CD4-positive, alpha-beta memory T cell (primary cell): ENCODE measurements at regions of chr13 and their contacts with region 1.

Region 1: GRCh38 chr13:75326173-75327134 is 155.5 kb downstream of the TBC1D4 start:
- DNase-seq: peak; percentile 79 to 87 (median 82)
- H3K4me3 ChIP-seq: peak overlapping the region; percentile 81 to 82
- H3K4me3 Mint-ChIP-seq: peak overlapping the region; percentile 89 to 98 (median 94)
- H3K27ac ChIP-seq: peak overlapping the region; percentile 85
- H3K27ac Mint-ChIP-seq: peak overlapping the region; percentile 92 to 99 (median 98)
- H3K4me1 ChIP-seq: peaks cover 33% of the 10 kb centered on the region
- H3K4me1 Mint-ChIP-seq: peaks cover 21 to 57% (median 35%) of the 10 kb centered on the region in 4 donors
- H3K27me3 ChIP-seq: no peaks in the 10 kb centered on the region
- H3K27me3 Mint-ChIP-seq: no peaks in the 10 kb centered on the region

Region 2: DNA sequence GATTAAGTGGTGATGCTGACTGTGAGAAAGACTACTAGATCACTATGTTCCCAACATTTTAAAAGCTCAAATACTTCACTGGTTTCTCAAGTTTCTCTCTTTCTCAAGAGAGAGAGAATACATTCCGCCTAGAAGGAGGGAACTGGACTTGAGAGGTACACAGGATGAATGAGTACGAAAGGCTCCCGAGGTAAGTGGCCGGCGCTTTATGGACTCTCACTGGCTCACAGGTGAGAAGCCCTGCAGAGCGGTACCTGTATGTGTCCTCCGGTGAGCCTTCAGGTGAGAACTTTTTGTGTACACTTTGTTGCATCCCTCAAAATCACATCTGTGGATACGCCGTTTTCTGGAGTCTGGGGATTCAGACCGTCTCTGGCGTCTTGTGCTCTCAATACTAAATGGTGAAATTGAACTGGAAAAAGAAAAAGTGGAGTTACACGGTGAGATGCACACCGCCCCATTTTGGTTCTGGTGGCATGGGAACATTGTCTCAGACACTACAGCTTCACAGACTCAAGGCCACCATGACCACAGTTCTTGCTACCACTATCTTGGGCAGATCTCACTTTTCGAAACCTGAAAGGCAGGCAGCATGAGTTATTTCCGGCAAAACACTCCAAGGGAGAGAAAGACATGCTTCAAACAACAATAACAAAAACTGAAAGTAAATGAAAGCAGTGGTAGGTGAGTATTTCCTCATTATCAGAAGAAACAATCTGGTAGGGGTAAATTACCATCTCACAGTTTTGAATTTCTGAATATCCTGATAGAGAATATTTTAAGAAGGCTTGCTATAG is 1611.1 kb before region 1 on chr13:
- CTCF ChIA-PET with region 1: no interaction called
- POLR2A ChIA-PET with region 1: interaction called, 4 read pairs
- intact Hi-C with region 1: loop called (anchors 10 kb)
- DNase-seq: peak; percentile 71 to 91 (median 79)
- H3K4me3 ChIP-seq: peak overlapping the region in 1 of 2 donors; percentile 6
- H3K4me3 Mint-ChIP-seq: peak overlapping the region; percentile 58 to 88 (median 78)
- H3K27ac ChIP-seq: peak overlapping the region; percentile 41
- H3K27ac Mint-ChIP-seq: peak overlapping the region; percentile 84 to 98 (median 94)
- H3K4me1 ChIP-seq: peaks cover 52% of the 10 kb centered on the region
- H3K4me1 Mint-ChIP-seq: peaks cover 48 to 70% (median 64%) of the 10 kb centered on the region in 4 donors
- H3K27me3 ChIP-seq: no peaks in the 10 kb centered on the region
- H3K27me3 Mint-ChIP-seq: no peaks in the 10 kb centered on the region

Region 3: DNA sequence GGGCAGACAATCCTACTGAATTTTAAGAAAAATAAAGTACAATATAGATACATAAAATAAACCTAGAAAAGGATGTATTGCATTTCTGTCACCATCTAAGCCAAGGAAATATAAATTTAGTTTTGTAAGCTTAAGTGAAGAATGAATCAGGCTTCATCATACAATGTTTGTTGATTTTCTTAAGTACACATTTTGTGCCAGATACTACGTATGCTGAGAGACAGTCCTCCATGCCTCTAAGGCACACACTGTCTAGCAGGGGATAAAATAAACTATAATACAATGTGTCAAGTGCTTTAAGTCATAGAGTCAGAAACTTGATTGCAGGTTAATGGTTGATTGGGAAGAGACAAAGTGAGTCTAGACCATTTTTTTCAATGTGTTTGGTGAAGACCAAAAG is 310.2 kb before region 1 on chr13:
- CTCF ChIA-PET with region 1: no interaction called
- POLR2A ChIA-PET with region 1: no interaction called
- intact Hi-C with region 1: no loop called
- DNase-seq: no peak
- H3K4me3 ChIP-seq: no peak overlapping the region
- H3K4me3 Mint-ChIP-seq: no peak overlapping the region
- H3K27ac ChIP-seq: no peak overlapping the region
- H3K27ac Mint-ChIP-seq: no peak overlapping the region
- H3K4me1 ChIP-seq: no peaks in the 10 kb centered on the region
- H3K4me1 Mint-ChIP-seq: no peaks in the 10 kb centered on the region
- H3K27me3 ChIP-seq: no peaks in the 10 kb centered on the region
- H3K27me3 Mint-ChIP-seq: peaks cover 5 to 17% of the 10 kb centered on the region in 2 donors

Region 4: GRCh38 chr13:75305059-75305458 is 21.4 kb before region 1 on chr13:
- CTCF ChIA-PET with region 1: interaction called, 3 read pairs
- POLR2A ChIA-PET with region 1: interaction called, 129 read pairs
- intact Hi-C with region 1: no loop called
- DNase-seq: no peak
- H3K4me3 ChIP-seq: no peak overlapping the region
- H3K4me3 Mint-ChIP-seq: no peak overlapping the region
- H3K27ac ChIP-seq: no peak overlapping the region
- H3K27ac Mint-ChIP-seq: peak overlapping the region in 1 of 7 donors; percentile 5
- H3K4me1 ChIP-seq: peaks cover 13% of the 10 kb centered on the region
- H3K4me1 Mint-ChIP-seq: peaks cover 0 to 13% (median 9%) of the 10 kb centered on the region in 4 donors
- H3K27me3 ChIP-seq: no peaks in the 10 kb centered on the region
- H3K27me3 Mint-ChIP-seq: no peaks in the 10 kb centered on the region

Region 5: DNA sequence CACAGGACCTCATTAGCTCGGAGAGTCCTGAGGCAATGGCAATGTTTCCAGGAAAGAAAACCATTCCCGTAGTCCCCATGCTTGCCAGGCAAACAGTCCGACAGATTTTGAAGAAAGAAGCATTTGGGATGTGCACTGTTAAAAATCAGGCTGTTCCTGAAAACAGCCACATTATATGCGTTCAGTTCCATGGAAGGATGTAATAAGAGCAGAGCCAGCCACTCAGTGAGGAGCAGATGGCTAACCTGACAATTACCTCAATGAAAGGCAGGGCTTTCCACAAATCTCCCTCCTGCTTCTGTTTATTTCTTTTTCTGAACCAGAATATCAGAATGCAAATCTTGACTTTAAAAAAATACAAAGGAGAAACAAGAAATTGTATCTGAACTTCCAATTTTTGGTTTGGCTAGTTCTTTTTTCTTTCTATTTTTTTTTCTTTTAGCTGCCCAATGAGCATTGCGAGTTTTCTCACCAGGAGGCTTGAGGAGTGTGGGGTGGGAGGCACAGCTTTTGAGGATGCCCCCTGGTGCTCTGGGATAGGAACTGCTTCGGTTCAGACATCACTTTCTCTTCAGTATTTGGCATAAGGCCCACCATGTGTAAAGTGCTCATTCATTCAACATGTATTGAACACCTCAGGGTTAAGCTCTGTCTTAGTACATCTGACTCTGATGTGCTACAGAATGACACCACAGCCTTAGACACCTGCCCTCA is 31.3 kb after region 1 on chr13:
- CTCF ChIA-PET with region 1: interaction called, 26 read pairs
- POLR2A ChIA-PET with region 1: interaction called, 18 read pairs
- intact Hi-C with region 1: loop called (anchors 1 kb)
- DNase-seq: peak; percentile 50 to 62 (median 55)
- H3K4me3 ChIP-seq: no peak overlapping the region
- H3K4me3 Mint-ChIP-seq: no peak overlapping the region
- H3K27ac ChIP-seq: no peak overlapping the region
- H3K27ac Mint-ChIP-seq: no peak overlapping the region
- H3K4me1 ChIP-seq: no peaks in the 10 kb centered on the region
- H3K4me1 Mint-ChIP-seq: peaks cover 0 to 3% (median 1%) of the 10 kb centered on the region in 4 donors
- H3K27me3 ChIP-seq: no peaks in the 10 kb centered on the region
- H3K27me3 Mint-ChIP-seq: peaks cover 0 to 4% of the 10 kb centered on the region in 2 donors

Region 6: DNA sequence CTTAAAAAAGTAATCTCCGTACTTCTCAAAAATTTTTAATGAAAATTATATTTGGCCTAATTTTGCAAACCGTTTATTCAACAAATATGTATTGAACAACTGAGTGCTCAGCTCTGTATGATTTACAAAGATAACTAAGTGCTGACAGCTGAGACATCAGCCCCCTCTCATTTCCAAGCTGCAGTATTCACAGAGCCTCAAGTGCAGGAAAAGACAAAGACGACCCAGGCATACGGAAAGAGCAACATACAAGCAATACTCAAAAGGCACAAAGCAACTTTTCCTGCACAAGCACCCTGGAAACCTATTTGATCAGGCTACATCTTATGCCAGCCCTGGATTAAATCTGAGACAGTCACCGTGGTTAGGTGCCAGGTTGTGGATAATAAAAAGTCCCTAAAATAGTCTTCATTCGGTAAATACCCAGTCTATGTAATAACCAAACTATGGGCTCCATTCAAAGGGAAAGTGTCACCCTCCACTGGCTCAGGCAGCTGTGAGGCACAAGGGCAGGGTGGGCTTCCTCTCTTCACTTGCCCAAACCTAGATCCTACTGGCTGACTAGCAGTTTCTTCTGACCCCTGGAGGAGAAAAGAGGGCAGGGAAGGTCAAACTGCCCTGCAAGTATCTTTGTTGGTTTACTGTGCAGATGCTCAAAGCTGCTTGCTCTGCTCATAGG is 90.0 kb after region 1 on chr13:
- CTCF ChIA-PET with region 1: no interaction called
- POLR2A ChIA-PET with region 1: no interaction called
- intact Hi-C with region 1: no loop called
- DNase-seq: no peak
- H3K4me3 ChIP-seq: no peak overlapping the region
- H3K4me3 Mint-ChIP-seq: no peak overlapping the region
- H3K27ac ChIP-seq: no peak overlapping the region
- H3K27ac Mint-ChIP-seq: no peak overlapping the region
- H3K4me1 ChIP-seq: no peaks in the 10 kb centered on the region
- H3K4me1 Mint-ChIP-seq: peaks cover 0 to 1% (median 0%) of the 10 kb centered on the region in 4 donors
- H3K27me3 ChIP-seq: no peaks in the 10 kb centered on the region
- H3K27me3 Mint-ChIP-seq: peaks cover 6 to 10% of the 10 kb centered on the region in 2 donors

Region 7: GRCh38 chr13:75549262-75550158 is 223.1 kb after region 1 on chr13 and contains the start of gene UCHL3:
- CTCF ChIA-PET with region 1: interaction called, 3 read pairs
- POLR2A ChIA-PET with region 1: interaction called, 9 read pairs
- intact Hi-C with region 1: loop called (anchors 2 kb)
- DNase-seq: peak; percentile 95 to 97 (median 97)
- H3K4me3 ChIP-seq: peak within 1 kb of the TSS; percentile 73 to 78
- H3K4me3 Mint-ChIP-seq: peak within 1 kb of the TSS; percentile 93 to 98 (median 97)
- H3K27ac ChIP-seq: peak within 1 kb of the TSS; percentile 83
- H3K27ac Mint-ChIP-seq: peak within 1 kb of the TSS; percentile 94 to 99 (median 99)
- H3K4me1 ChIP-seq: peaks cover 30% of the 10 kb centered on the region
- H3K4me1 Mint-ChIP-seq: peaks cover 26 to 46% (median 36%) of the 10 kb centered on the region in 4 donors
- H3K27me3 ChIP-seq: no peaks in the 10 kb centered on the region
- H3K27me3 Mint-ChIP-seq: no peaks in the 10 kb centered on the region
- total RNA-seq, gene UCHL3: 17.5 to 20.2 TPM

Region 8: DNA sequence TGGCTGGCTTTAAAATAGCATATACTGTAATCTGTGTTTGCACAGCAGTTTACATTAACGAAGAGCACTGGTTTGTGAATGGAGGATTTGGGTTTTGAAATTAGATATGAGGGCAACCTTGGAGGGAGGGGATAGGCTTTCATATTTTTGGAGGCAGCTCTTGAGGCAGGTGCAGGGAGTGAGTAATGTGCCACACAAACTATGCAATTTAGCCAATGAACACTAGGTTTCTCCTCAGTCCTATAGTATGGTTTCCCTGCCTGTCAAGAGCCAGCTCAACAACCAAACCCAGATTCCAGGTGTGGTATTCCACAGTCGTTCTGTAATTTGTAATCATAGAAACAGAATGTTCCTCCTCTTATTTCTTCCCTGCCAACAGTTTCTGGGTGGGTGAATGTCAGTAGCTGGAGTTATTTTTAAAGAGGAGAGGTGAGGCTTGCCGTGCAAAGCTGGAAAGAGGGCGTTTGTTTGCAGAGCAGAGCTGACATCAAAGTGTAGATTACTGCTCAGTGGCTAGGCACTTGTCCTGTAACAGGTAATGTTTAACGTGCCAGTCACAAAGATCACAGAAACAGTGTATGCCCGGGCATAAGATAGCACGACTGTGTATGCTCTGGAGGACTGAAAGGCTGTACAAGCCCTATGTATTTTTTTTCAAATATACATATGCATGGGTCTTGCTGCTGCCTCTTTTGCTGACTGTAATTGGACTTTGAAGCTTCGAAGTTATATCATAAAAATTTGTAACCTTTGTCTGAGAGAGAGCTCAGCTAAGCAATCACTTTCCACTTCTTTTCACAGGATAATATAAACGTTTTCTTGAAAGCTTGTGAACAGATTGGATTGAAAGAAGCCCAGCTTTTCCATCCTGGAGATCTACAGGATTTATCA is 433.9 kb after region 1 on chr13:
- CTCF ChIA-PET with region 1: no interaction called
- POLR2A ChIA-PET with region 1: interaction called, 4 read pairs
- intact Hi-C with region 1: loop called (anchors 10 kb)
- DNase-seq: peak in 4 of 5 donors; percentile 24 to 29 (median 26)
- H3K4me3 ChIP-seq: peak overlapping the region in 1 of 2 donors; percentile 20
- H3K4me3 Mint-ChIP-seq: peak overlapping the region; percentile 77 to 91 (median 84)
- H3K27ac ChIP-seq: no peak overlapping the region
- H3K27ac Mint-ChIP-seq: peak overlapping the region; percentile 62 to 87 (median 77)
- H3K4me1 ChIP-seq: peaks cover 64% of the 10 kb centered on the region
- H3K4me1 Mint-ChIP-seq: peaks cover 54 to 80% (median 66%) of the 10 kb centered on the region in 4 donors
- H3K27me3 ChIP-seq: no peaks in the 10 kb centered on the region
- H3K27me3 Mint-ChIP-seq: no peaks in the 10 kb centered on the region

Region 9: DNA sequence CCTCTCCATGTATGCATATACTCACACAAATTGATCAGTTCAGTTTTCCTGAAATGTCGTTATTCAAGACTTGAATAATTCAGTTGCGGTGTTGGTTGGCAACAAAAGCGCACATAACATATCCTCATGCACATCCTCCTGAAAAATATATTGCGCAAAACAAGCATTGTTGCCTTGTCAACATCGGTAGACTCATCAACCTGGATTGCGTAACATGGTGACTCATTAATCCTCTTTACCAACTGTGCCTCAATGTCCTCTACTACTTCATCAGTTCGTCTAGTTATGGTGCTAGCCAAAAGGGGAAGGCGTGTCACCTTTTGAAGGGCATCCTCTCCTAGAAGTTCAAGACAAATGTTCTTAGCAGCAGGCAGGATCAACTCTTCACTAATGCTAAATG is 667.4 kb after region 1 on chr13:
- CTCF ChIA-PET with region 1: no interaction called
- POLR2A ChIA-PET with region 1: no interaction called
- intact Hi-C with region 1: no loop called
- DNase-seq: no peak
- H3K4me3 ChIP-seq: no peak overlapping the region
- H3K4me3 Mint-ChIP-seq: no peak overlapping the region
- H3K27ac ChIP-seq: no peak overlapping the region
- H3K27ac Mint-ChIP-seq: no peak overlapping the region
- H3K4me1 ChIP-seq: no peaks in the 10 kb centered on the region
- H3K4me1 Mint-ChIP-seq: no peaks in the 10 kb centered on the region
- H3K27me3 ChIP-seq: no peaks in the 10 kb centered on the region
- H3K27me3 Mint-ChIP-seq: no peaks in the 10 kb centered on the region